Activated B cell treated with CpG ODN at 0.5 μM for 24 hours (primary cell): ENCODE measurements at regions of chr10 and their contacts with region 1.

Region 1: GRCh38 chr10:62610649-62611229 is 193.8 kb upstream of the ADO start:
- DNase-seq: peak; percentile 37
- ATAC-seq: peak; percentile 95
- H3K4me3 Mint-ChIP-seq: no peak overlapping the region
- H3K27ac Mint-ChIP-seq: peak overlapping the region; percentile 30
- H3K4me1 Mint-ChIP-seq: peaks cover 15% of the 10 kb centered on the region
- H3K27me3 Mint-ChIP-seq: no peaks in the 10 kb centered on the region
- CTCF ChIP-seq: peak; percentile 38

Region 2: DNA sequence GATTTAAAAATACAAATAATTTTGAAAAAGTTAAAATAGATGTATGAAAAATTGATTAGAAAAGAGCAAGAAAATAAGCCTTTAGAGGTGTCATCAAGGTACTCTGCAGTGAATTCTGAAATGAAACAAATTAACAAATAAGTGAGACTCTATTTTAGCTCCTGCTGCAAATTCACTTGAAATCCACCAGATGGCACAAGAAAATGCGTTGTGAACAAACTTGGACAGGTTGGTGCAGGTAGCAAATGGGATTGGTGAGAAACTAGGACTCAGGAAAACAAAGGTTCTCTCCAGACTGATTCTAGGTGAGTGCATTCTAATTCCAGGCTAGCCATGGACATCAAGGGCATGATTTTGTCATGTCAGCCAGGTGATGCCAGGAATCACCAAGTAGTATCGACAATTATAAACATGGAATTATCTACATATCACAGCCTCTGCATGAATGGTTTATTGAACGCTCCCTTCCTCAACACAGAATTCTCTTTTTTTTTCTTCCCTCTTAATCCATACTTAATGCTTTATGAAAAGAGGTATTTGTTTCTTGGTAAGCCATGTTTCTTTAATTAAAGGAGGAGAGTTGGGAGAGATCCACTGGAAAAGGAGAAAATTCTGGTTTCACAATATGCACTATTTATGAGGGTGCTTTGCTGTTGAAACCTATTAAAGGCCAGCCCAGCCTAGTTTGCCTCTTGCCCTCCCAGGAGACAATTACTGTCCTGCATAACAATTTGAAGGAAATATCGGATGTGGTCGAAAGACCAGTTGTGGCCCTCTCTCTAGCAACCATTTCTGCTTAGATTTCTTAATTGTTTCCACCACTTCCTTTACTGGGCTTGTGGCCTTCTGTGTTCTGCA is 118.5 kb before region 1 on chr10:
- CTCF ChIA-PET with region 1: interaction called, 6 read pairs
- POLR2A ChIA-PET with region 1: interaction called, 3 read pairs
- intact Hi-C with region 1: loop called (anchors 5 kb)
- DNase-seq: no peak
- ATAC-seq: peak; percentile 49
- H3K4me3 Mint-ChIP-seq: no peak overlapping the region
- H3K27ac Mint-ChIP-seq: no peak overlapping the region
- H3K4me1 Mint-ChIP-seq: peaks cover 27% of the 10 kb centered on the region
- H3K27me3 Mint-ChIP-seq: peaks cover 4% of the 10 kb centered on the region
- CTCF ChIP-seq: no peak

Region 3: DNA sequence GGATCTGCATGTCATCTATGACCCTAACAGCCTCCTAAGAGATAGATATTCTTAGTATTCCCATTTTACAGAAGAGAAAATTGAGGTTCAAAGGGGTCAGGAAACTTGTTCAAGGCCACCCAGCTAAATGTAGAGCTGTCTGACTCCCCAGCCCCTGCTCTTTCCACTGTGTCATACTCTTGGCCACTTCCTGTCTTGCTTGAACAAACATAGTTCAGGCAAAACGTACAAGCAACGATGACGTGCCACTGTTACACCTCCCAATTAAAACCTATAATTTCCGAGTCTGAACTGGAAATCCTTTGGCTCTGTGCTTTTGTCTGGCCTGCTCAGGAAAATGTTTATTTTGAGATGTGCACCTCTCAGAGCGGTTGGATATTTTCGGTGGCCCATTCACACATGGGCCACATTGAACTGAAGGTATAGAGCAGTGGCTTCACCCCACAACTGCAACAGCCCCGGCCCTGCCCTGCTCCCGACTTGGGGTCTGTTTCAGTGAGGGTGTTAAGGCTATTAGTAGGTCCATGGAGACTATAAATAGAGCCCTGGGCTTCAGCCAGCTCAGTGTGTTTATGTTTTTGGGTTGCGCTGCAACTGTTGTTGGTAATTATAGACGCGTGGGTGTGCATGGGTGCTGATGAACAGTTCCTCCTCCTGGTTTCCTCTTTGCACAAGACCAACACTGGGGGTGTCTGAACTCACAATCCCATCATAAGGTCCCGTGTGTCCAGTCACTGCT is 21.5 kb after region 1 on chr10:
- CTCF ChIA-PET with region 1: interaction called, 5 read pairs
- POLR2A ChIA-PET with region 1: no interaction called
- intact Hi-C with region 1: loop called (anchors 2 kb)
- DNase-seq: no peak
- ATAC-seq: peak; percentile 81
- H3K4me3 Mint-ChIP-seq: peak overlapping the region; percentile 83
- H3K27ac Mint-ChIP-seq: peak overlapping the region; percentile 98
- H3K4me1 Mint-ChIP-seq: peaks cover 58% of the 10 kb centered on the region
- H3K27me3 Mint-ChIP-seq: no peaks in the 10 kb centered on the region
- CTCF ChIP-seq: no peak

Region 4: GRCh38 chr10:62732841-62733653 is 122.3 kb after region 1 on chr10:
- CTCF ChIA-PET with region 1: interaction called, 12 read pairs
- POLR2A ChIA-PET with region 1: no interaction called
- intact Hi-C with region 1: loop called (anchors 1 kb)
- DNase-seq: peak; percentile 46
- ATAC-seq: peak; percentile 77
- H3K4me3 Mint-ChIP-seq: peak overlapping the region; percentile 62
- H3K27ac Mint-ChIP-seq: no peak overlapping the region
- H3K4me1 Mint-ChIP-seq: peaks cover 2% of the 10 kb centered on the region
- H3K27me3 Mint-ChIP-seq: no peaks in the 10 kb centered on the region
- CTCF ChIP-seq: no peak

Region 5: DNA sequence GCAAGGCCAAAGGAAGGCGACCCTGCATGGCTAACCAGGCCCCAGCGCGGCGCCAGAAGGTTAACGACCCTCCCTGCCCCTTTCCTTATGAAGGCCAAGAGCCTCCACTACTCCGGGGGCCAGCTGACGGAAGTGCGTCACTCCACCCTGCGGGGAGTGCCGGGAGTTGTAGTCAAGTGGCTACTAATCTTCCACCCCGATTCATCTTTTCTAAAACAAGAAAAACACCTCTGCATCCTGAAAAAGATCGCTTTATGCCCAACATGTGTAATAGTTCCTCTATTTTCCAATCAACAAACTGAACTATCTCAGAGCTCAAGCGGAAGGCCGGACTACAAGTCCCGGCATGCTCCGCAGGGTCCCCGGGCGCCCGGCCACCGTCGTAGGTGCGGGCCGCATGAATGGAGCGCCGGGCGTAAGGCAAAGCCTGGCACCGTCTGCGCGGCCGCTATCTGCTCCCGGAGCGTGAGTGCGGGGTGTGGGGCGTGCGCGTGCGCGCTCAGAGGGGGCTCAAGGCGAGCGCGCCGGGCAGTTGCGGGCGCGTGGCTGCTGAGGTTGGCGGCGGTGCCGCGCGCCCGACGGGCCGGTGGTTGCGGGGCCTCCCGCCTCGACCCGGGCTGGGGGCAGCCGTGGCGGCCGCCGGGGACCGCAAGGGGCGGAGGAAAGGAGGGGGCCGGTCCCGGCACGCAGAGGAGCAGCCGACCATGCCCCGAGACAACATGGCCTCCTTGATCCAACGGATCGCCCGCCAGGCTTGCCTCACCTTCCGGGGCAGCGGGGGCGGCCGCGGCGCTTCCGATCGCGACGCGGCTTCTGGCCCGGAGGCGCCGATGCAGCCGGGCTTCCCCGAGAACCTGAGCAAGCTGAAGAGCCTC is 193.9 kb after region 1 on chr10 and contains the start of gene ADO:
- CTCF ChIA-PET with region 1: interaction called, 15 read pairs
- POLR2A ChIA-PET with region 1: no interaction called
- intact Hi-C with region 1: no loop called
- DNase-seq: peak; percentile 77
- ATAC-seq: peak; percentile 87
- H3K4me3 Mint-ChIP-seq: peak within 1 kb of the TSS; percentile 95
- H3K27ac Mint-ChIP-seq: peak within 1 kb of the TSS; percentile 99
- H3K4me1 Mint-ChIP-seq: peaks cover 41% of the 10 kb centered on the region
- H3K27me3 Mint-ChIP-seq: no peaks in the 10 kb centered on the region
- CTCF ChIP-seq: no peak
- total RNA-seq, gene ADO: 21.6 and 21.7 TPM in 2 replicates

Region 6: DNA sequence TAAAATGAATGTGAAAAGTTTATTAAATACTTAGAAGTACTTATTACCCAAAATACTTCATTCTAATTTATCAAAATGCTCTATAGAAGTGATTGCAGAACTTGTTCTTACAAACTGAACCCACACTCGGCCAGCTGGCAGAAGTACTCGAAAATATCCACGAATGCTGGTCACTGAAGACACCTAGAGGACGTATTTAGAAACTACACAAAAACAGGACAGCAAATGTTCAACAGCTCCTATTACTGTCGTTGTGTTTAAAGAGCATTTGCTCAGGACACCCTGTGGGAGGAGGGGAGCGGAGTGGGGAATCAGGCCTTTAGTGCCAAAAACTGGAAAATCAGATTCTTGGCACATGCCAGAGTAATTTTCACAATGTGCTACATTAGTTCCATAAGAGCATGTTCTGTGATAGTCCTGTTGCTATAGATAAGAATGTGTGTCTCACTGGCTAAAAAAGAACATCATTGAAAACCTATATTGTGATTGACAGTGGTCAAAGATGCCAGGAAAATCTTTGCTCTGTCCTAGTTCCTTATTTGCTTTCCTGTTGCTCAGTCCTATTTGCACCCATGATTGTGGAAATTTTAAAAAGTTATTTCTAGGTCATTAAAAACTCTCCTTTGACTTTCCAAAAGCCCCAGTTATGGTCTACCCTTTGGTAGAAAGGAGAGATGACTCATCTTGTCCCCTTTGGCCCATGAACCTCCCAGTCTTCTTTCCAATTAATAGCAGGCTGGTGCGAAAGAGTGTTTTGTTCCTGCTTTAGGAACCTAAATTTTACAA is 473.4 kb after region 1 on chr10:
- CTCF ChIA-PET with region 1: interaction called, 31 read pairs
- POLR2A ChIA-PET with region 1: no interaction called
- intact Hi-C with region 1: loop called (anchors 1 kb)
- DNase-seq: no peak
- ATAC-seq: peak; percentile 77
- H3K4me3 Mint-ChIP-seq: no peak overlapping the region
- H3K27ac Mint-ChIP-seq: no peak overlapping the region
- H3K4me1 Mint-ChIP-seq: no peaks in the 10 kb centered on the region
- H3K27me3 Mint-ChIP-seq: peaks cover 9% of the 10 kb centered on the region
- CTCF ChIP-seq: peak; percentile 53